ENCODE measurements at regions of chr4 and their contacts with region 1.

Region 1: GRCh38 chr4:103099691-103100392 is at the start of gene BDH2:
- DNase-seq: peak; percentile 65
- H3K4me3 Mint-ChIP-seq: peak within 1 kb of the TSS; percentile 79
- H3K27ac Mint-ChIP-seq: peak within 1 kb of the TSS; percentile 81
- H3K4me1 Mint-ChIP-seq: peaks cover 26% of the 10 kb centered on the region
- H3K27me3 Mint-ChIP-seq: no peaks in the 10 kb centered on the region
- total RNA-seq, gene BDH2: 16.2 to 20.4 TPM

Region 2: DNA sequence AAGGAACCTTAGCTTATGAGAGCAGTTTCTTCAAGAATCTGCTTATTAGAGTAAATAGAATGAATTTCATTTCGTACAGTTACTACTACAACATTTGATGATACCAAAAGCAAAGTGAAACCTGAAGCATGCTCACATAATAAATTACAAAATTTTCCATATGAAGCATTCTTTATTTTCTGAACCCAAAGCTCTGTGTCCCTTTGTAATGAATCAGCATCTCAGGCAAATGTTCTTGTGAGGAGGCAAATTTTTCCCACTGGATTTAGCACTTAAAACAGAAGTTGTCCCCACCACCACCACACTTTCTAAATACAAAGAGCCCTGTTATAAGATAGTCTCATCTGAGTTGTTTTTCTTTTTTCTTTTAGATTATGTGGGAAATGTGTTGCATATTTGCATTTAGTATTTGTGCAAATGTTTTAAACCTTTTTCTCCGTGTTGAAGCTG is 669.4 kb before region 1 on chr4:
- CTCF ChIA-PET with region 1: interaction called, 3 read pairs
- intact Hi-C with region 1: loop called (anchors 1 kb)
- DNase-seq: no peak
- H3K4me3 Mint-ChIP-seq: peak overlapping the region; percentile 82
- H3K27ac Mint-ChIP-seq: peak overlapping the region; percentile 81
- H3K4me1 Mint-ChIP-seq: peaks cover 8% of the 10 kb centered on the region
- H3K27me3 Mint-ChIP-seq: peaks cover 5% of the 10 kb centered on the region

Region 3: GRCh38 chr4:102620697-102621497 is 478.9 kb before region 1 on chr4:
- CTCF ChIA-PET with region 1: interaction called, 3 read pairs
- intact Hi-C with region 1: loop called (anchors 1 kb)
- DNase-seq: peak; percentile 30
- H3K4me3 Mint-ChIP-seq: no peak overlapping the region
- H3K27ac Mint-ChIP-seq: no peak overlapping the region
- H3K4me1 Mint-ChIP-seq: peaks cover 52% of the 10 kb centered on the region
- H3K27me3 Mint-ChIP-seq: no peaks in the 10 kb centered on the region

Region 4: DNA sequence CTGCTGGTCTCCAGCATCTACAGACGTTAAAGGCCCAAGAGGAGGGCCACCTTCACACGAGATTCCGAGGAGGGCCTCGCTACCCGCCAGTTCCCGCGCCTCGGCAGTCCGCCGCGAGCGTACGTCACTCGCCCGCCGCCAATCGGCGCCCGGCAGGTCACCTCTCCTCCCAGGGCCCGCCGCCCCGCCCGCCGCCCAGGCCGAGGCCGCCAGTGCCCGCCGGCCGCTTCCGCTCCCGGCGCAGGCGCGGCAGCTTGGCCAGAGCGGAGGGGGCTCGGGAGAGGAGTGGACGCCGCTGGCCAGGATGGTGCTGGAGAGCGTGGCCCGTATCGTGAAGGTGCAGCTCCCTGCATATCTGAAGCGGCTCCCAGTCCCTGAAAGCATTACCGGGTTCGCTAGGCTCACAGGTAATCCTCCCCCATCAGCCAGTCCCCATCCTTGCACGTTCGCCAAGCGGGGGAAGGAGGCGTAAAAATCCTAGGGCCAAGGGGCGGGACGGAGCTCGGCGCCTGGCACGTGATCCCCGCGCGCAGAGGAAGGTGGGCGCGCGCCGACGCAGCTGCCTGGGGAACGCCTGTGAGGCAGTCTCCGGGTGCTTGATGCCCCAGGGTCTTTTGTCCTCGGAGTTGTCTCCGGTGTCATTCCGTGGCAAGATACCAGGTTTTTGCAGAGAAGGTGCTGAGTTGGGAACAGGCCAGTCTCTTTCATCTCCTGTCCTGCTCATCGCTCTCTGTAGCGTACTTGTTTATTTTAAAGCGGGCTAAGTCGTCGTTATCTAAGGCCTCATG is 230.9 kb before region 1 on chr4 and contains the start of gene CISD2:
- CTCF ChIA-PET with region 1: interaction called, 3 read pairs
- intact Hi-C with region 1: loop called (anchors 1 kb)
- DNase-seq: peak; percentile 95
- H3K4me3 Mint-ChIP-seq: peak within 1 kb of the TSS; percentile 94
- H3K27ac Mint-ChIP-seq: peak within 1 kb of the TSS; percentile 97
- H3K4me1 Mint-ChIP-seq: peaks cover 51% of the 10 kb centered on the region
- H3K27me3 Mint-ChIP-seq: no peaks in the 10 kb centered on the region
- total RNA-seq, gene CISD2: 25.1 to 25.7 TPM

Region 5: DNA sequence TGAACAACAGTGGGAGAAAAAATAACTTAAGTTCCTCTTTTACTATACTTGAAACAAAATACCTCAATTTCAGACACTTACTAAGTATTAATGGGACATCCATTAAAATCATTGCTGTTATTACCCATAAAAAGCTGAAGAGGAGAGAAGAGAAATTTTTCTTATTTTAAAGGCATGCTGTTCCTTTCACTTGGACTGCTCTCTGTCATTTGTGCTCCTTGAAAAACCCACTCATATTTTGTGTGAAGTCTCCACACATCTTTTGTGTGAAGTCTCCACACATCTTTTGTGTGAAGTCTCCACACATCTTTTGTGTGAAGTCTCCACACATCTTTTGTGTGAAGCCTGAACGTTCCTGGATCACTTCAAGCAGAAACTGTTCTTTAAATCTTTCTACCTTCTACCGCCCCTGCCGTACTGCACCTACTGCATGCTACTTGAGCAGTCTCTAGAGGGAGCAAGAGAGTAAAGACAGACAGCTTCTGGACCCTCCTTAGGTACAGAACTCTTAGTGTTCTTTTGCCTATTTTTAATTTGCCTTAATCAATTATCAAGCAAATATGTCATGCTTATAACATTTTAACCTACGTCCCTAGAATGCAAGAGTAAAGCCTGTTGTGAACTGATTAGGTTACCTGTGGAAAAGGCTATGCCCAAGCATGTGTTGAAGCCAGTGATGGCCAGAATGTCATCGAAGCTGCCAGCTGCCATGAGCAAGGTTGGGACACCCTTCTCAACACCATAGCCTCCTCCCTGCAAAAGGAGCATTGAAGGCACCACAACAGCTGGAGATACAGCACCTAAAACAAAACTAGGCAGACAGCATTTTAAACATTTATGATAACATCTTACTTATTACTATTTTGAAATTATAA is 53.2 kb before region 1 on chr4:
- CTCF ChIA-PET with region 1: interaction called, 27 read pairs
- intact Hi-C with region 1: loop called (anchors 1 kb)
- DNase-seq: peak; percentile 42
- H3K4me3 Mint-ChIP-seq: no peak overlapping the region
- H3K27ac Mint-ChIP-seq: no peak overlapping the region
- H3K4me1 Mint-ChIP-seq: peaks cover 10% of the 10 kb centered on the region
- H3K27me3 Mint-ChIP-seq: no peaks in the 10 kb centered on the region

Region 6: GRCh38 chr4:103934178-103934789 is 834.4 kb after region 1 on chr4:
- CTCF ChIA-PET with region 1: no interaction called
- intact Hi-C with region 1: loop called (anchors 5 kb)
- DNase-seq: peak; percentile 30
- H3K4me3 Mint-ChIP-seq: no peak overlapping the region
- H3K27ac Mint-ChIP-seq: no peak overlapping the region
- H3K4me1 Mint-ChIP-seq: no peaks in the 10 kb centered on the region
- H3K27me3 Mint-ChIP-seq: no peaks in the 10 kb centered on the region

Measured in activated naive CD4-positive, alpha-beta T cell treated with anti-CD3 and anti-CD28 coated beads for 36 hours (primary cell).